Mammary epithelial cell (primary cell): ENCODE measurements at regions of chr9 and their contacts with region 1.

Region 1: GRCh38 chr9:108565651-108566378 is 290.0 kb downstream of the ACTL7B start:
- DNase-seq: peak; percentile 79
- H3K4me3 ChIP-seq: no peak overlapping the region
- H3K27ac ChIP-seq: no peak overlapping the region
- H3K4me1 ChIP-seq: peaks cover 39% of the 10 kb centered on the region
- H3K27me3 ChIP-seq: no peaks in the 10 kb centered on the region
- CTCF ChIP-seq: peak; percentile 80 to 88

Region 2: GRCh38 chr9:107472581-107473340 is 1093.1 kb before region 1 on chr9:
- CTCF ChIA-PET with region 1: no interaction called
- dilution Hi-C with region 1: no loop called
- in situ Hi-C with region 1: loop called in 1 of 2 experiments (anchors 10 kb)
- intact Hi-C with region 1: no loop called
- DNase-seq: no peak
- H3K4me3 ChIP-seq: no peak overlapping the region
- H3K27ac ChIP-seq: no peak overlapping the region
- H3K4me1 ChIP-seq: no peaks in the 10 kb centered on the region
- H3K27me3 ChIP-seq: no peaks in the 10 kb centered on the region
- CTCF ChIP-seq: no peak

Region 3: DNA sequence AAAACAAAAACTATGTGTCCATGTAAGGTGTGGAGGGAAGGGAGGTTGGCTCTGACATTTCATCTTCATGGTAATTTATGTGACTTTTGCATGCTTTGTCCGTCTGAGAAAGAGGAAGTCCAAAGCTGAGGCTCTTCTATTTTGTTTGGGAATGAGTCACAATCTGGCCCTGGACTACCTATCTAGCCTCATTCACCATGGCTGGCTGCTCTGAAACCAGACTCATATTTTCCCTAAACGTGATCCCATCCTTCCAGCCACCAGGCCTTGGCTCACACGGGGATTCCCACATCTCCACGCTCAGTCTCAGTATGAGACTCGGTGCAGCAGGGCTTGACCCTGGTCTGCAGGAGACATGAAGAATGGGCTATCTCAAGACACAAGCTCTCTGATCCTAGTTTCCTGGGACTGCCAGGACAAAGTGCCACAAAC is 382.8 kb before region 1 on chr9:
- CTCF ChIA-PET with region 1: no interaction called
- dilution Hi-C with region 1: no loop called
- in situ Hi-C with region 1: no loop called
- intact Hi-C with region 1: loop called (anchors 5 kb)
- DNase-seq: peak; percentile 56
- H3K4me3 ChIP-seq: no peak overlapping the region
- H3K27ac ChIP-seq: no peak overlapping the region
- H3K4me1 ChIP-seq: peaks cover 27% of the 10 kb centered on the region
- H3K27me3 ChIP-seq: no peaks in the 10 kb centered on the region
- CTCF ChIP-seq: no peak

Region 4: GRCh38 chr9:108468402-108468801 is 97.4 kb before region 1 on chr9:
- CTCF ChIA-PET with region 1: no interaction called
- dilution Hi-C with region 1: no loop called
- in situ Hi-C with region 1: no loop called
- intact Hi-C with region 1: loop called (anchors 1 kb)
- DNase-seq: peak; percentile 49
- H3K4me3 ChIP-seq: no peak overlapping the region
- H3K27ac ChIP-seq: no peak overlapping the region
- H3K4me1 ChIP-seq: peaks cover 29% of the 10 kb centered on the region
- H3K27me3 ChIP-seq: no peaks in the 10 kb centered on the region
- CTCF ChIP-seq: peak; percentile 58 to 62

Region 5: GRCh38 chr9:108634204-108634603 is 68.4 kb after region 1 on chr9:
- CTCF ChIA-PET with region 1: no interaction called
- dilution Hi-C with region 1: no loop called
- in situ Hi-C with region 1: no loop called
- intact Hi-C with region 1: loop called (anchors 1 kb)
- DNase-seq: peak; percentile 74
- H3K4me3 ChIP-seq: peak overlapping the region in 1 of 3 experiments; percentile 12
- H3K27ac ChIP-seq: peak overlapping the region; percentile 98
- H3K4me1 ChIP-seq: peaks cover 20% of the 10 kb centered on the region
- H3K27me3 ChIP-seq: no peaks in the 10 kb centered on the region
- CTCF ChIP-seq: no peak

Region 6: GRCh38 chr9:108831536-108832500 is 266.0 kb after region 1 on chr9:
- CTCF ChIA-PET with region 1: no interaction called
- dilution Hi-C with region 1: no loop called
- in situ Hi-C with region 1: no loop called
- intact Hi-C with region 1: no loop called
- DNase-seq: peak; percentile 89
- H3K4me3 ChIP-seq: no peak overlapping the region
- H3K27ac ChIP-seq: peak overlapping the region; percentile 53
- H3K4me1 ChIP-seq: peaks cover 53% of the 10 kb centered on the region
- H3K27me3 ChIP-seq: no peaks in the 10 kb centered on the region
- CTCF ChIP-seq: no peak